Activated CD4-positive, alpha-beta memory T cell treated with anti-CD3 and anti-CD28 coated beads for 36 hours (primary cell): ENCODE measurements at regions of chr17 and their contacts with region 1.

Region 1: GRCh38 chr17:45640141-45640850 is 143.8 kb upstream of the CRHR1 start:
- DNase-seq: peak; percentile 76
- H3K4me3 Mint-ChIP-seq: no peak overlapping the region
- H3K27ac Mint-ChIP-seq: peak overlapping the region; percentile 1
- H3K4me1 Mint-ChIP-seq: peaks cover 4% of the 10 kb centered on the region
- H3K27me3 Mint-ChIP-seq: no peaks in the 10 kb centered on the region

Region 2: GRCh38 chr17:45628019-45628418 is 12.3 kb before region 1 on chr17:
- CTCF ChIA-PET with region 1: interaction called, 14 read pairs
- POLR2A ChIA-PET with region 1: no interaction called
- intact Hi-C with region 1: no loop called
- DNase-seq: no peak
- H3K4me3 Mint-ChIP-seq: no peak overlapping the region
- H3K27ac Mint-ChIP-seq: no peak overlapping the region
- H3K4me1 Mint-ChIP-seq: peaks cover 5% of the 10 kb centered on the region
- H3K27me3 Mint-ChIP-seq: no peaks in the 10 kb centered on the region

Region 3: GRCh38 chr17:45703348-45703747 is 63.1 kb after region 1 on chr17:
- CTCF ChIA-PET with region 1: no interaction called
- POLR2A ChIA-PET with region 1: no interaction called
- intact Hi-C with region 1: no loop called
- DNase-seq: no peak
- H3K4me3 Mint-ChIP-seq: no peak overlapping the region
- H3K27ac Mint-ChIP-seq: no peak overlapping the region
- H3K4me1 Mint-ChIP-seq: peaks cover 3% of the 10 kb centered on the region
- H3K27me3 Mint-ChIP-seq: peaks cover 22% of the 10 kb centered on the region

Region 4: GRCh38 chr17:45828628-45829027 is 188.3 kb after region 1 on chr17:
- CTCF ChIA-PET with region 1: interaction called, 83 read pairs
- POLR2A ChIA-PET with region 1: interaction called, 3 read pairs
- intact Hi-C with region 1: loop called (anchors 1 kb)
- DNase-seq: no peak
- H3K4me3 Mint-ChIP-seq: no peak overlapping the region
- H3K27ac Mint-ChIP-seq: no peak overlapping the region
- H3K4me1 Mint-ChIP-seq: peaks cover 3% of the 10 kb centered on the region
- H3K27me3 Mint-ChIP-seq: peaks cover 1% of the 10 kb centered on the region

Region 5: GRCh38 chr17:45834471-45835396 is 194.4 kb after region 1 on chr17:
- CTCF ChIA-PET with region 1: interaction called, 83 read pairs
- POLR2A ChIA-PET with region 1: interaction called, 3 read pairs
- intact Hi-C with region 1: loop called (anchors 1 kb)
- DNase-seq: no peak
- H3K4me3 Mint-ChIP-seq: no peak overlapping the region
- H3K27ac Mint-ChIP-seq: no peak overlapping the region
- H3K4me1 Mint-ChIP-seq: no peaks in the 10 kb centered on the region
- H3K27me3 Mint-ChIP-seq: peaks cover 1% of the 10 kb centered on the region

Region 6: GRCh38 chr17:45852535-45853297 is 212.4 kb after region 1 on chr17:
- CTCF ChIA-PET with region 1: interaction called, 19 read pairs
- POLR2A ChIA-PET with region 1: no interaction called
- intact Hi-C with region 1: no loop called
- DNase-seq: peak; percentile 65
- H3K4me3 Mint-ChIP-seq: no peak overlapping the region
- H3K27ac Mint-ChIP-seq: no peak overlapping the region
- H3K4me1 Mint-ChIP-seq: no peaks in the 10 kb centered on the region
- H3K27me3 Mint-ChIP-seq: peaks cover 18% of the 10 kb centered on the region

Region 7: DNA sequence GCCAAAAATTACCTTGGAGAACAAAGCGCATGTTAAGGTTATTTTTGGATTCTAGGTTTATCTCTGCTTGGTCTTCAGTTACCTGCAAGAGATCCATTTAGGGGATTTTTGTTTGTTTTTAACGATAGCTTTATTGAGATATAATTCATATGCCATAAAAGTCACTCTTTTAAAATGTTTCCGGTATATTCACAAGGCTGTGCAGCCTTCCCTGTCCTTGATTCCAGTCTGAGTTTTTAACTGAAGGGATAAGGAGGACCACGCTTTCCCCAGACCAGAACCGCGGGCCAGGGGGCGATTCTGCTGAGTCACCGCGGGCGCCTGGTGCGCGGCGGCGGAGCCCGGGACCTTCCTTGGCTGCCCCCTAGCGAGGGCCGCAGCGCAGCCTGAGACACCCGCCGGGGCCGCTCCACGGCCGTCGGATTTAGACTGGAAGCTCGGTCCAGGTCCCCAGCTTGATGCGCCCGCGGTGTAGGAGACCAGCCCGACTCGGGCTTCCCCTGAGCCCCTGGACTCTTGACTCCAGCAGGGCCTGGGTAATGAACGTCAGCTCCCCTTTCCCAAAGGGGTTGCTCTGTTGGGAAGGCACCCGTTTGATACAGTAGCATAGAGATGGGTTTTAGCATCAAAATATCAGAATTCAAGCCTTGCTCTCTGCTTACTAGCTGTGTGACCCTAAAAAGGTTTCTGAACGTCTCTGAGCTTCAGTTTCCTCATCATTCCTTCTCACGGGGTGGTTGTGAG is 308.8 kb after region 1 on chr17:
- CTCF ChIA-PET with region 1: interaction called, 11 read pairs
- POLR2A ChIA-PET with region 1: no interaction called
- intact Hi-C with region 1: no loop called
- DNase-seq: peak; percentile 79
- H3K4me3 Mint-ChIP-seq: peak overlapping the region; percentile 64
- H3K27ac Mint-ChIP-seq: no peak overlapping the region
- H3K4me1 Mint-ChIP-seq: peaks cover 11% of the 10 kb centered on the region
- H3K27me3 Mint-ChIP-seq: peaks cover 14% of the 10 kb centered on the region